GM10248 (cell line): ENCODE measurements at regions of chr3 and their contacts with region 1.

Region 1: GRCh38 chr3:50028336-50028735 is 60.4 kb upstream of the RBM5 start:
- DNase-seq: no peak
- CTCF ChIP-seq: no peak

Region 2: DNA sequence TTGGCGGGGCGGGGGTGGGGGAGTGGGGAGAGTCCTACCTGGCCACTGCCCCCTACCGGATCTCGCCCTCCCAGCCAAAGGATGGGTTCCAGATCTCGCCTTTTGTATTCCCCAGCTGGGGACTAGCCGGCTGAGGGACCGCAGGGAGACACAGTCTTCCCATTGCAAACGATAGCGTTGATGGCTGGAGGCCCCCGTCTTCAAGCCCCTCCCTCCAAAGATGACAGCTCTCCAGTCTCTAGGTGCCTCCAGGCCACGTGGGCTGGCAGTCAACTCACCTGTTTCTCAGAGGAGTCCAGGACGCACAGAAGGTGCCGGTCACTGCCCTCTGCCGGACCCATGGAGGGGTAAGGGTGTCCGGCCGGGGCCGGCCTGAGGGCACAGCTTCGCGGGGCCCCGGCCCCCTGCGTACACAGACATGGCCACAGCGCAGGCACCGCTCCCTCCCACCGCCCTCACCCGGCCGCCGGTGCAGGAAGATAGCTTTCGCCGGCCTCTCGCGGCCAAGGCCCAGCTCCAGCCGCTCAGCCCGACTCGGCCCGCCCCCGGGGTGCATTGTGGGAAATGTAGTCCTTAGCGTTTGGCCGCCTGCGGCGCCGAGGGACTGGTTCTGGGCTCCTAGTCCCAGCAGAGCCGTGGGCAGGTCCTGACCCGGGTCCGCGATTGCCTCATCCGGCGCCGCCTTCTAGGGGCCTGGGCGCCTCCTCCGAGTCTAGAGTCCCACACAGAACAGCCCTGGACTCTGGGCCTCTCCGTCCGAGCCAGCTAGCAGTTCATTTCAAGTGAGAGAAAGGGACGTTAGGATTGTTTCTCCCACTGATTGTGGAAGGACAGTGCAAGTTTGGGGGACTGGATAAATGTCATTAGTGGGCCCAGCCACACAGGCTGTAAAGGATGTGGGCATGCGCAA is 98.8 kb before region 1 on chr3 and contains the start of gene MON1A:
- CTCF ChIA-PET with region 1: no interaction called
- POLR2A ChIA-PET with region 1: no interaction called
- DNase-seq: peak; percentile 91
- CTCF ChIP-seq: no peak

Region 3: GRCh38 chr3:50015918-50016317 is 12.4 kb before region 1 on chr3:
- CTCF ChIA-PET with region 1: interaction called, 10 read pairs
- POLR2A ChIA-PET with region 1: no interaction called
- DNase-seq: no peak
- CTCF ChIP-seq: no peak